ENCODE measurements at regions of chr1 and their contacts with region 1.

Region 1: DNA sequence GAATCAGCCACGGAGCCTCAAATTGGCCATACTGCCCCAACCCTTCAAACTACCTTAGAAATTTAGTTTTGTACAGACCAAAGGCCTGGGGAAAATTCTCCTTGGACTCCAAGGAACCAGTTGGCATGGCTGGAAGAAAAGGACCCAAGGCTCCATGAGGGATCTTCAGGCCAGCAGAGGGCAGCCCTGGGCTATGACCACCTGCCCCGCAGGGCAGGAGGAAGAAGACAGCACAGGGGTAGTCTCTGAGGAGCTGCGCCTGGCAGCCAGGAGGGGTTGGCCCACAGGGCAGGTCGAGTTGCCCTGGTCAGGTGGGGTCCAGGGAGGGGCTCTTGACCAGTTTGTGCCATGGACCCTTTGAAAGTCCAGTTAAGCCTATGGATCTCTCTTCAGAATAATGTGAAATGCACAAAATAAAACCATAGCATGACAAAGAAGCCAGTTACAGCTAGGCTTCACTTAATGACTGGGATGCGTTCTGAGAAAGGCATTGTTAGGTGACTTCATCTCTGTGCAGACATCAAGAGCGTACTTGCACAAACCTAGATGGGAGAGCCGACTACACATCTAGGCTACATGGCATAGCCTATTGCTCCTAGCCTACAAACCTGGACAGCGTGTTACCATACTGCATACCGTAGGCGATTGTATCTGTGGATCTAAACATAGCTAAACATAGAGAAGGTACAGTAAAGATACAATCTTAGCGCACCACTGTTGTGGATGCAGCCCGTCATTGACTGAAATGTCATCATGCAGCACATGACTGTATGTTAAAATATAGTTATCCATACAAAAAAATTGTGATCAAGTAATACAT is 26.1 kb downstream of the CACNA1S start:
- DNase-seq: peak; percentile 67 to 84 (median 78)
- H3K4me3 ChIP-seq: no peak overlapping the region
- H3K27ac ChIP-seq: no peak overlapping the region
- H3K4me1 ChIP-seq: no peaks in the 10 kb centered on the region
- H3K27me3 ChIP-seq: no peaks in the 10 kb centered on the region
- CTCF ChIP-seq: peak; percentile 44 to 69 (median 66)
- POLR2A ChIP-seq: no peak

Region 2: GRCh38 chr1:201025571-201026009 is 60.5 kb before region 1 on chr1:
- intact Hi-C with region 1: no loop called
- DNase-seq: peak in 1 of 7 donors; percentile 22
- H3K4me3 ChIP-seq: no peak overlapping the region
- H3K27ac ChIP-seq: peak overlapping the region in 1 of 5 donors; percentile 42
- H3K4me1 ChIP-seq: peaks cover 5 to 41% of the 10 kb centered on the region in 2 donors
- H3K27me3 ChIP-seq: no peaks in the 10 kb centered on the region
- CTCF ChIP-seq: no peak
- POLR2A ChIP-seq: no peak

Region 3: GRCh38 chr1:201114236-201115131 is 28.4 kb after region 1 on chr1:
- intact Hi-C with region 1: loop called in 1 of 2 experiments (anchors 5 kb)
- DNase-seq: peak; percentile 87 to 96 (median 94)
- H3K4me3 ChIP-seq: peak overlapping the region in 3 of 4 donors; percentile 38 to 79 (median 41)
- H3K27ac ChIP-seq: peak overlapping the region in 1 of 5 donors; percentile 74
- H3K4me1 ChIP-seq: peaks cover 0 to 3% of the 10 kb centered on the region in 2 donors
- H3K27me3 ChIP-seq: no peaks in the 10 kb centered on the region
- CTCF ChIP-seq: peak; percentile 76 to 95 (median 89)
- POLR2A ChIP-seq: peak in 1 of 2 donors; percentile 43

Region 4: GRCh38 chr1:201184307-201185122 is 98.4 kb after region 1 on chr1:
- intact Hi-C with region 1: loop called in 1 of 2 experiments (anchors 5 kb)
- DNase-seq: peak in 6 of 7 donors; percentile 70 to 81 (median 74)
- H3K4me3 ChIP-seq: no peak overlapping the region
- H3K27ac ChIP-seq: peak overlapping the region in 1 of 5 donors; percentile 27
- H3K4me1 ChIP-seq: peaks cover 0 to 7% of the 10 kb centered on the region in 2 donors
- H3K27me3 ChIP-seq: no peaks in the 10 kb centered on the region
- CTCF ChIP-seq: peak; percentile 54 to 71 (median 62)
- POLR2A ChIP-seq: no peak

Region 5: GRCh38 chr1:201229771-201230635 is 143.9 kb after region 1 on chr1:
- intact Hi-C with region 1: loop called in 1 of 2 experiments (anchors 10 kb)
- DNase-seq: peak in 1 of 7 donors; percentile 24
- H3K4me3 ChIP-seq: no peak overlapping the region
- H3K27ac ChIP-seq: no peak overlapping the region
- H3K4me1 ChIP-seq: no peaks in the 10 kb centered on the region
- H3K27me3 ChIP-seq: no peaks in the 10 kb centered on the region
- CTCF ChIP-seq: no peak
- POLR2A ChIP-seq: no peak

Measured in adrenal gland (tissue), 19 donors.